GM12878 (cell line): ENCODE measurements at regions of chr11 and their contacts with region 1.

Region 1: DNA sequence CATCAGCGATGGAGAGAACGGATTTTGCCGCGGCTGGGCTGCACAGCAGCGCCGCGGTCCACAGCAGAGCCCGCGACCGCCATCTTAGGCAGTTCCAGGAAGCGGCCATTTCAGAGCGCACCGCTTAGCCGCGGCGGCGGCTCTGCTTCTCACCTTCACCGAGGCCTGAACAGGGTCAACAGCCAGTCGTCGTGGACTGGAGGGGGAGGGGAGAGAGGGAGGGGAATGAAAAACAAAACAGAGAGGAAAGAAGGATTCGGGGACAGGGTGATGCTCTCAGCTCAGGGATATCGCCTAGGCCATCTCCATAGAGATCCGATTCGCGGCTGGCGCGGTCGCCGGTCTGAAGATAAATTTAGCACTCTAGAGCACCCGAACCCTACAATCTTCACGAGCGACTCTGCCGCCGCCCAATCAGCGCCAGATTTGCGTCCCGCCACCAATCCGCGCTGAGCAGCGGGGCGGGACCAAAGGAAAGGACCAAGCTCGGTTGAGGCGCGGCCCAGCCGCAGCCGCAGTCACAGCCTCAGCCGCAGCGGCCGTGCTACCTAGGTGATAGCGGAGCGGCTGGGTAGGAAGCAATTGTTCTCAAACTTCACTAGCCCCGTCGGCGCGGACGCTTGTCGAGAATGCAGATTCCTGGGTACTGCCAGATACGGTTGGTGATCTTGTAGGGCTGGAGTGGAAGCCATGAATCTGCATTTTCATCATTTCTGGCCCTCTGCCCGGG is at the start of gene ZBED5:
- DNase-seq: peak; percentile 90
- ATAC-seq: peak; percentile 95
- H3K4me3 ChIP-seq: peak within 1 kb of the TSS; percentile 92
- H3K27ac ChIP-seq: peak within 1 kb of the TSS; percentile 87
- H3K4me1 ChIP-seq: no peaks in the 10 kb centered on the region
- H3K27me3 ChIP-seq: no peaks in the 10 kb centered on the region
- CTCF ChIP-seq: peak in 2 of 3 experiments; percentile 1 to 4; a peak in 1 of 6 replicates
- EP300 ChIP-seq: peak in 1 of 2 experiments; percentile 53; a peak in 3 of 4 replicates
- POLR2A ChIP-seq: peak; percentile 84
- RAD21 ChIP-seq: no peak
- polyA plus RNA-seq, gene ZBED5: 27.3 to 29.4 TPM

Region 2: DNA sequence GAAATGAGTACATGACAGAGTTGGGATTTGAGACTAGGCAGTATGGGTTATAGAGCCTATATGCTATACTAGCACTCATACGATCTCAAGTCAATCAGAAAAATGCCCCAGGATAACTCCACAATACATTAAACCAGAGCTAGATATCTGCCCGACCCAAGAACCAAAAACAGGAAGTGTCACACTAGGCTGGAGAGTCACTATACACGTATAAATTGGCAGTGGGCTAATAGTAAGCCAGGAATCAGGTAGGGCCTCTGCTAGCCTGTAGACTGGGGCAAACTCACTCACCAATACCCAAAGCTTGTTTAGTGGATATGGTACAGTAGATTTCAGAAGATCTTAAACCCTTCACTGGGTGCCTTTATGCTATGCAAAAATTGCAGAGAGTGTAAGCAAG is 33.0 kb before region 1 on chr11:
- CTCF ChIA-PET with region 1: interaction called, 3 read pairs
- POLR2A ChIA-PET with region 1: interaction called, 4 read pairs
- RAD21 ChIA-PET with region 1: no interaction called
- SMC1A ChIA-PET with region 1: interaction called, 4 read pairs
- in situ Hi-C with region 1: no loop called
- intact Hi-C with region 1: loop called (anchors 5 kb)
- DNase-seq: no peak
- ATAC-seq: peak; percentile 83
- H3K4me3 ChIP-seq: 0 out of 2 replicates have a peak overlapping the region, but pooled peaks have one; percentile 7
- H3K27ac ChIP-seq: peak overlapping the region; percentile 4; the same call in 1 of the 2 replicates
- H3K4me1 ChIP-seq: peaks cover 8% of the 10 kb centered on the region; the same call in 1 of the 2 replicates
- H3K27me3 ChIP-seq: no peaks in the 10 kb centered on the region
- CTCF ChIP-seq: no peak
- EP300 ChIP-seq: no peak
- POLR2A ChIP-seq: no peak
- RAD21 ChIP-seq: no peak

Region 3: GRCh38 chr11:10899121-10899830 is 41.4 kb after region 1 on chr11:
- CTCF ChIA-PET with region 1: interaction called, 5 read pairs
- POLR2A ChIA-PET with region 1: interaction called, 11 read pairs
- RAD21 ChIA-PET with region 1: no interaction called
- SMC1A ChIA-PET with region 1: no interaction called
- in situ Hi-C with region 1: no loop called
- intact Hi-C with region 1: no loop called
- DNase-seq: no peak
- ATAC-seq: peak; percentile 64
- H3K4me3 ChIP-seq: no peak overlapping the region
- H3K27ac ChIP-seq: no peak overlapping the region
- H3K4me1 ChIP-seq: no peaks in the 10 kb centered on the region; the same call in 1 of the 2 replicates
- H3K27me3 ChIP-seq: no peaks in the 10 kb centered on the region
- CTCF ChIP-seq: no peak
- EP300 ChIP-seq: no peak
- POLR2A ChIP-seq: no peak
- RAD21 ChIP-seq: no peak

Region 4: GRCh38 chr11:10943968-10944367 is 86.1 kb after region 1 on chr11:
- CTCF ChIA-PET with region 1: no interaction called
- POLR2A ChIA-PET with region 1: no interaction called
- RAD21 ChIA-PET with region 1: no interaction called
- SMC1A ChIA-PET with region 1: no interaction called
- in situ Hi-C with region 1: no loop called
- intact Hi-C with region 1: no loop called
- DNase-seq: no peak
- ATAC-seq: no peak
- H3K4me3 ChIP-seq: no peak overlapping the region
- H3K27ac ChIP-seq: no peak overlapping the region
- H3K4me1 ChIP-seq: no peaks in the 10 kb centered on the region
- H3K27me3 ChIP-seq: no peaks in the 10 kb centered on the region; a peak in 2 of 4 replicates
- CTCF ChIP-seq: no peak
- EP300 ChIP-seq: no peak
- POLR2A ChIP-seq: no peak
- RAD21 ChIP-seq: no peak